B cell (primary cell): ENCODE measurements at regions of chr17 and their contacts with region 1.

Region 1: GRCh38 chr17:44899069-44899782 is at the start of gene EFTUD2:
- DNase-seq: peak; percentile 98
- ATAC-seq: peak; percentile 90
- H3K4me3 ChIP-seq: peak within 1 kb of the TSS; percentile 77 to 98 (median 88)
- H3K4me3 Mint-ChIP-seq: peak within 1 kb of the TSS; percentile 98
- H3K27ac ChIP-seq: peak within 1 kb of the TSS; percentile 98 to 100
- H3K27ac Mint-ChIP-seq: peak within 1 kb of the TSS; percentile 100
- H3K4me1 ChIP-seq: peaks cover 13 to 23% of the 10 kb centered on the region in 2 donors
- H3K4me1 Mint-ChIP-seq: peaks cover 29% of the 10 kb centered on the region
- H3K27me3 ChIP-seq: peaks cover 0 to 3% (median 0%) of the 10 kb centered on the region in 4 experiments
- H3K27me3 Mint-ChIP-seq: no peaks in the 10 kb centered on the region
- CTCF ChIP-seq: no peak
- total RNA-seq, gene EFTUD2: 133 and 137 TPM in 2 replicates

Region 2: GRCh38 chr17:44655983-44656710 is 243.1 kb before region 1 on chr17 and contains the start of gene MEIOC:
- CTCF ChIA-PET with region 1: no interaction called
- POLR2A ChIA-PET with region 1: no interaction called
- intact Hi-C with region 1: no loop called
- DNase-seq: peak; percentile 37
- ATAC-seq: peak; percentile 86
- H3K4me3 ChIP-seq: peak within 1 kb of the TSS in 2 of 5 experiments; percentile 23 to 28
- H3K4me3 Mint-ChIP-seq: peak within 1 kb of the TSS; percentile 83
- H3K27ac ChIP-seq: no peak within 1 kb of the TSS
- H3K27ac Mint-ChIP-seq: peak within 1 kb of the TSS; percentile 53
- H3K4me1 ChIP-seq: peaks cover 3 to 13% of the 10 kb centered on the region in 2 donors
- H3K4me1 Mint-ChIP-seq: peaks cover 5% of the 10 kb centered on the region
- H3K27me3 ChIP-seq: peaks cover 0 to 28% (median 17%) of the 10 kb centered on the region in 4 experiments
- H3K27me3 Mint-ChIP-seq: peaks cover 28% of the 10 kb centered on the region
- CTCF ChIP-seq: no peak
- total RNA-seq, gene MEIOC: 0.12 and 0.29 TPM in 2 replicates

Region 3: GRCh38 chr17:44708401-44709181 is 190.6 kb before region 1 on chr17 and contains the start of gene DBF4B:
- CTCF ChIA-PET with region 1: no interaction called
- POLR2A ChIA-PET with region 1: no interaction called
- intact Hi-C with region 1: loop called (anchors 1 kb)
- DNase-seq: peak; percentile 94
- ATAC-seq: peak; percentile 96
- H3K4me3 ChIP-seq: peak within 1 kb of the TSS; percentile 85 to 99 (median 90)
- H3K4me3 Mint-ChIP-seq: no peak within 1 kb of the TSS
- H3K27ac ChIP-seq: peak within 1 kb of the TSS; percentile 35 to 68
- H3K27ac Mint-ChIP-seq: peak within 1 kb of the TSS; percentile 32
- H3K4me1 ChIP-seq: peaks cover 13 to 17% of the 10 kb centered on the region in 2 donors
- H3K4me1 Mint-ChIP-seq: peaks cover 4% of the 10 kb centered on the region
- H3K27me3 ChIP-seq: peaks cover 0 to 2% (median 0%) of the 10 kb centered on the region in 4 experiments
- H3K27me3 Mint-ChIP-seq: peaks cover 4% of the 10 kb centered on the region
- CTCF ChIP-seq: no peak
- total RNA-seq, gene DBF4B: 13.8 and 15.9 TPM in 2 replicates

Region 4: DNA sequence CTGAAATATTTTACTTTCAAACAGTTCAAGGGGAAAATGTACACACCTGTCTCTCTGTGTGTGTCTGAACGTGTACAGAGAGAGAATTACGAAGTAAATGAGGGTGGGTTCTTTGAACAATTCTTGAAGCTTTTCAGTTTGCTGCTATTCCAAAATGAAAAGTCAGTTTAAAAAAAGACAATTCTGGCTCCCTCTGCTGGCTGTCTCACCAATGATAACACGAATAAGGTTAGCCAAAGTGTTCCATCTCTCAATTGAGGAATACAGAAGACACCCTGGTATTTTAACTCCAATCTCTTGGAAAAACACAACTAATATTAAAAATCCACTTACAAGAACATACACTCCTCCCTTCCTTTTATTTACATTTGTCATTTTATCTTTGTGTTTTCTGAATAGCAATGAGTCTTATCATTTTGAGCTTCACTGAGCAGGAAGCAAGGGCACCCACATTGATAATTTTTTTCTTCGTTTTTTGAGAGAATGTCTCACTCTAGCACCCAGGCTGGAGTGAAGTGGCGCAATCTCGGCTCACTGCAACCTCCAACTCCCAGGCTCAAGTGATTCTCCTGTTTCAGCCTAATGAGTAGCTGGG is 20.5 kb before region 1 on chr17:
- CTCF ChIA-PET with region 1: interaction called, 16 read pairs
- POLR2A ChIA-PET with region 1: no interaction called
- intact Hi-C with region 1: no loop called
- DNase-seq: peak; percentile 45
- ATAC-seq: no peak
- H3K4me3 ChIP-seq: no peak overlapping the region
- H3K4me3 Mint-ChIP-seq: no peak overlapping the region
- H3K27ac ChIP-seq: no peak overlapping the region
- H3K27ac Mint-ChIP-seq: no peak overlapping the region
- H3K4me1 ChIP-seq: no peaks in the 10 kb centered on the region
- H3K4me1 Mint-ChIP-seq: no peaks in the 10 kb centered on the region
- H3K27me3 ChIP-seq: no peaks in the 10 kb centered on the region
- H3K27me3 Mint-ChIP-seq: no peaks in the 10 kb centered on the region
- CTCF ChIP-seq: peak; percentile 64

Region 5: DNA sequence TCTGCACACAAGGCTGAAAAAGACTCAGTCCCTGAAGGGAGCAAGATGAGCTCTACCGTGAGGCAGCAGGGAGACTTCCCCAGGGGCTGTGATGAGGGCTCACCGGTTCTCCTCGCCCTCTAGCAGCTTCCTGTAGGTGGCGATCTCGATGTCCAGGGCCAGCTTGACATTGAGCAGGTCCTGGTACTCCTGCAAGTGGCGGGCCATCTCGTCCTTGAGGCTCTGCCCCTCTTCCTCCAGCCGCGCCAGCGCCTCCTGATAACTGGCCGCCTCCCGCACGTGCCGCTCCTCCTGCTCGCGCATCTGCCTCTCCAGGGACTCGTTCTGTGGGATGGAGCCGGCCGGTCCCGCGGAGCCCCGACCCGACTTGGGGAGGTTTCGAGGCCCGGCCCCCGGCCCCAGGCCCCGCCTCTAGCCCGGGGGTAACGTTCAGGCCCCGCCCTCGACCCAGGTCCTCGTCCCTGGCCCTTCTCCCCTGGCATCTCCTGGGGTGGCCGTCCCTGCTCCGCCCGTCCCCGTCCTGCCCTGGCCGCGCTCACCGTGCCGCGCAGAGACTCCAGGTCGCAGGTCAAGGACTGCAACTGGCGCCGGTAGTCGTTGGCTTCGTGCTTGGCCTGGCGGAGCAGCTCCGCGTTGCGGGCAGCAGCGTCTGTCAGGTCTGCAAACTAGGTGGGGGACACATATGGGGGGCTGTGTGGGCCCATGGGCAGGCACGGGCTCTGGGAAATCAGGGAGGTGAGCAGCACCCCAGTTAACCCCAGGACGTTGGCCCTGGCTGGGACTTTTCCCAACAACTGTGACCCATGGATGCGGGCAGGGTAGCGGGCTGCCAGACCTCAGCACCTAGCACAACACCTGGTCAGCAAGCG is 12.1 kb after region 1 on chr17:
- CTCF ChIA-PET with region 1: no interaction called
- POLR2A ChIA-PET with region 1: no interaction called
- intact Hi-C with region 1: no loop called
- DNase-seq: peak; percentile 63
- ATAC-seq: peak; percentile 69
- H3K4me3 ChIP-seq: peak overlapping the region in 3 of 5 experiments; percentile 27 to 39 (median 28)
- H3K4me3 Mint-ChIP-seq: peak overlapping the region; percentile 76
- H3K27ac ChIP-seq: no peak overlapping the region
- H3K27ac Mint-ChIP-seq: no peak overlapping the region
- H3K4me1 ChIP-seq: peaks cover 9 to 13% of the 10 kb centered on the region in 2 donors
- H3K4me1 Mint-ChIP-seq: peaks cover 16% of the 10 kb centered on the region
- H3K27me3 ChIP-seq: peaks cover 0 to 33% (median 8%) of the 10 kb centered on the region in 4 experiments
- H3K27me3 Mint-ChIP-seq: peaks cover 38% of the 10 kb centered on the region
- CTCF ChIP-seq: peak; percentile 19

Region 6: GRCh38 chr17:44947461-44948314 is 48.5 kb after region 1 on chr17 and contains the start of gene KIF18B:
- CTCF ChIA-PET with region 1: no interaction called
- POLR2A ChIA-PET with region 1: no interaction called
- intact Hi-C with region 1: loop called (anchors 1 kb)
- DNase-seq: peak; percentile 91
- ATAC-seq: peak; percentile 98
- H3K4me3 ChIP-seq: peak within 1 kb of the TSS; percentile 62 to 79 (median 67)
- H3K4me3 Mint-ChIP-seq: peak within 1 kb of the TSS; percentile 99
- H3K27ac ChIP-seq: peak within 1 kb of the TSS; percentile 56 to 64
- H3K27ac Mint-ChIP-seq: peak within 1 kb of the TSS; percentile 95
- H3K4me1 ChIP-seq: peaks cover 7 to 15% of the 10 kb centered on the region in 2 donors
- H3K4me1 Mint-ChIP-seq: peaks cover 8% of the 10 kb centered on the region
- H3K27me3 ChIP-seq: peaks cover 0 to 4% (median 4%) of the 10 kb centered on the region in 4 experiments
- H3K27me3 Mint-ChIP-seq: peaks cover 6% of the 10 kb centered on the region
- CTCF ChIP-seq: no peak
- total RNA-seq, gene KIF18B: 0.44 TPM in 1 of 2 replicates, not detected in the other

Region 7: DNA sequence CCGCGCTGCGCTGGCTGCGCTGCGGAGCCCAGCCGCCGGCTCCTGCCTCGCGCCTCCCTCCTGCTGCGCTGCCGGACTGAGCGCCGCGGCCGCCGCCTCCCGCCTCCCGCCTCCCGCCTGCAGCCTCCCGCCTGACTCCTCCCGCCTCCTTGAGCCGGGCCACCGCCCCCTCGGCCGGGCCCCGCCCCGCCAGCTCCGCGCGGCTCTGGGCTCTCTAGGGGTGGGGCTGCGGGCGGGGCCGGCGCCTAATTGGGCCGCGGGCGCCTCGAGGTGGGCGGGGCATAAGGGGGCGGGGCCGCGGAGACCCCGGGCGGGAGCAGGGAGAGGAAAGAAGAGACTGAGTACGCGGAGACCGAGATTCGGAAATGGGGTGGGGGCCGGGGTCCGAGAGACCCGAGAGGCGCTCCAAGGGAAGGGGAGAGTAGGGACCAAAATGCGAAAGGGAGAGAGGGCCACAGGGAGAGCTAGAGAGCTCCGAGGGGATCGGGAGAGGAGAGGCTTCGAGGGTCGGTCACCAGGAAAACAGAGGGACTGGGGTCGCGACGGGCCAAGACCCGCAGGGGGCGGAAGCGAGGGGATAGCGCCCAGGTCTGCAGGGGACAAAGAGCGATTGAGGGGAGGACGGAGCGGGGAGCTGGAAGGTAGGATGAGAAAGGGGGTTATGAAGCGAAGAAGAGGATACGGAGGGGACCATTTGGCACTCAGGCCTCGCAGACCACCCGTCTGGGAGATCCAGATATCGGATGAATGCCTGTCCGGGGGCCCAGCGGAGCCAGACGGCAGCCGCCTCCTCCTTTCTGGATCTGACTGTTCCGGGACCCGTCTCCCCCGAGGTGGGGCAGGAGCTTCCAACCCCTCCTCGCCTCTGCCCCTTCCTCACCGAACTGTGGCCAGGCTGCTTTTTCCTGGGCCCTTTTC is 69.3 kb after region 1 on chr17 and contains the start of gene C1QL1:
- CTCF ChIA-PET with region 1: no interaction called
- POLR2A ChIA-PET with region 1: no interaction called
- intact Hi-C with region 1: loop called (anchors 1 kb)
- DNase-seq: peak; percentile 89
- ATAC-seq: peak; percentile 98
- H3K4me3 ChIP-seq: peak within 1 kb of the TSS in 4 of 5 experiments; percentile 25 to 52 (median 48)
- H3K4me3 Mint-ChIP-seq: peak within 1 kb of the TSS; percentile 75
- H3K27ac ChIP-seq: no peak within 1 kb of the TSS
- H3K27ac Mint-ChIP-seq: no peak within 1 kb of the TSS
- H3K4me1 ChIP-seq: peaks cover 32 to 45% of the 10 kb centered on the region in 2 donors
- H3K4me1 Mint-ChIP-seq: peaks cover 40% of the 10 kb centered on the region
- H3K27me3 ChIP-seq: peaks cover 0 to 61% (median 35%) of the 10 kb centered on the region in 4 experiments
- H3K27me3 Mint-ChIP-seq: peaks cover 54% of the 10 kb centered on the region
- CTCF ChIP-seq: no peak
- total RNA-seq, gene C1QL1: not detected in 2 replicates

Region 8: GRCh38 chr17:45060797-45061605 is 161.8 kb after region 1 on chr17 and contains the start of gene NMT1:
- CTCF ChIA-PET with region 1: no interaction called
- POLR2A ChIA-PET with region 1: interaction called, 9 read pairs
- intact Hi-C with region 1: loop called (anchors 1 kb)
- DNase-seq: peak; percentile 100
- ATAC-seq: peak; percentile 87
- H3K4me3 ChIP-seq: peak within 1 kb of the TSS; percentile 62 to 98 (median 96)
- H3K4me3 Mint-ChIP-seq: peak within 1 kb of the TSS; percentile 99
- H3K27ac ChIP-seq: peak within 1 kb of the TSS; percentile 75 to 89
- H3K27ac Mint-ChIP-seq: peak within 1 kb of the TSS; percentile 100
- H3K4me1 ChIP-seq: peaks cover 29 to 42% of the 10 kb centered on the region in 2 donors
- H3K4me1 Mint-ChIP-seq: peaks cover 40% of the 10 kb centered on the region
- H3K27me3 ChIP-seq: no peaks in the 10 kb centered on the region
- H3K27me3 Mint-ChIP-seq: no peaks in the 10 kb centered on the region
- CTCF ChIP-seq: no peak
- total RNA-seq, gene NMT1: 123 and 134 TPM in 2 replicates